Activated B cell treated with CpG ODN at 0.5 μM for 24 hours (primary cell): ENCODE measurements at regions of chr7 and their contacts with region 1.

Region 1: GRCh38 chr7:105531792-105532671 is at the start of gene RINT1:
- DNase-seq: peak; percentile 90
- ATAC-seq: peak; percentile 92
- H3K4me3 Mint-ChIP-seq: peak within 1 kb of the TSS; percentile 91
- H3K27ac Mint-ChIP-seq: peak within 1 kb of the TSS; percentile 96
- H3K4me1 Mint-ChIP-seq: peaks cover 33% of the 10 kb centered on the region
- H3K27me3 Mint-ChIP-seq: no peaks in the 10 kb centered on the region
- CTCF ChIP-seq: no peak
- total RNA-seq, gene RINT1: 31.1 and 35.5 TPM in 2 replicates

Region 2: DNA sequence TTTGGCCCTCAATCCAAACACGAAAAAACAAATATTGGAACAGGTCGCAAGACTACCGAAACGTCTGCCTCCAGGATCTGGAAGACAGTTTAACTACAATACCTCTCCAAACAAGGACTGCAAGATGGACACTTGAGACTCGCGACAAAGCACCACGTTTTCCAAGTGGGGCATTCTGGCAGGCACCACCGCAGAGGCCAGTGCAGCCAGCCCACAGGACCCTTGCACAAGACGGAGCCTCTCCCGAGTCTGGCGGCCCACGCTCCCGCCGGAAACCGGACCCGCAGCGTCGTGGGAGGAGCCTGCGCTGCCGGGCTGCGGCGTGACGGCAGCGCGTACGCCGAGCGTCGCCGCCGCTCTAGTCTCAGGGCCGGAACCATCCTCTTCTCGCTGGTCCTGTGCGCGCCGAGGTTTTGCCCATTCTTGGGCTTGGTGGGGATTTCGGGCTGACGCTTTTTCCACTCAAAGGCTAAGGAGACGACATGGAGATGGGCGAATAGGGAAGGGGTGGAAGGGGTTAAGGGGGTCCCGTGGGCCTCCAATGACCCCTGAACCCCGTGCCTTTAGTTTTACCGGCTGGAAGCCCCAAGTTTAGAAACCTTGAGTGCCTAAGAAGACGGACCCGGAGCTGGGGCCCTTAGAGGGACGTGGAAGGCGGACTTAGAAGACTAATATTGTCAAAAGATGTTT is 1324.2 kb before region 1 on chr7 and contains the start of gene ORC5:
- CTCF ChIA-PET with region 1: no interaction called
- POLR2A ChIA-PET with region 1: no interaction called
- intact Hi-C with region 1: loop called (anchors 5 kb)
- DNase-seq: peak; percentile 69
- ATAC-seq: peak; percentile 99
- H3K4me3 Mint-ChIP-seq: peak within 1 kb of the TSS; percentile 95
- H3K27ac Mint-ChIP-seq: peak within 1 kb of the TSS; percentile 90
- H3K4me1 Mint-ChIP-seq: peaks cover 29% of the 10 kb centered on the region
- H3K27me3 Mint-ChIP-seq: peaks cover 14% of the 10 kb centered on the region
- CTCF ChIP-seq: no peak
- total RNA-seq, gene ORC5: 22.1 and 23.0 TPM in 2 replicates

Region 3: GRCh38 chr7:105589356-105590077 is 57.5 kb after region 1 on chr7:
- CTCF ChIA-PET with region 1: no interaction called
- POLR2A ChIA-PET with region 1: no interaction called
- intact Hi-C with region 1: no loop called
- DNase-seq: no peak
- ATAC-seq: peak; percentile 89
- H3K4me3 Mint-ChIP-seq: no peak overlapping the region
- H3K27ac Mint-ChIP-seq: peak overlapping the region; percentile 27
- H3K4me1 Mint-ChIP-seq: peaks cover 38% of the 10 kb centered on the region
- H3K27me3 Mint-ChIP-seq: no peaks in the 10 kb centered on the region
- CTCF ChIP-seq: no peak